ENCODE measurements at regions of chr1 and their contacts with region 1.

Region 1: DNA sequence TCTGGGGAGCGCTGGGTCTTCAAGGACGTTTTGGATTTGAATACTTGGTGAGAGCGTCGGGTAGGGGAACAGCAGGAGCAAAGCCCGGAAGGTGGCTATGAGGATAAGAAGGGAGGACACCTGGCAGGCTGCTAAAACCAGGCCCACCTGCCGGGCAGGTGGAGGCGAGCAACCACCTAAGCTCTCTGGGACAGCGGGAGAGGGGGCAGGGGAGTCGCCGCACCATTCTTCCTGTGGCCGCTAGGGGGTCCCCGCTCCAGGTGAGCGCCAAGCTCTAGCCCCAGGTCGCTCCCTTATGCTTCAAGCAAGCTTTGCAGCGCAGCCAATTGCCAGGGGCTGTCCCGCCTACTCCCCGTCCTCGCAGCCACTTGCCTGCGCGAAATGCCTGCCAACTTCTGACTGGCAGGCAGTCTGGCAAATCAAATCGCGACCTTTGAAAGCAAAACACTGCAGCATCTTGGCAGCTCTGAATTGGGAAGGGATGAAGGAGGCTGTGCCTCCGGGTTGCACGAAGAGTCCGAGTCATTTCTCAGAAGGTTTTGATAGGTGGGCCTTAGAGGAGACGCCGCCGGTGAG is at the start of gene NIPAL3:
- DNase-seq: peak; percentile 99
- ATAC-seq: peak; percentile 96
- H3K4me3 Mint-ChIP-seq: peak within 1 kb of the TSS; percentile 99
- H3K27ac Mint-ChIP-seq: peak within 1 kb of the TSS; percentile 90
- H3K4me1 Mint-ChIP-seq: peaks cover 65% of the 10 kb centered on the region
- H3K27me3 Mint-ChIP-seq: no peaks in the 10 kb centered on the region
- total RNA-seq, gene NIPAL3: 43.4 to 46.9 TPM

Region 2: DNA sequence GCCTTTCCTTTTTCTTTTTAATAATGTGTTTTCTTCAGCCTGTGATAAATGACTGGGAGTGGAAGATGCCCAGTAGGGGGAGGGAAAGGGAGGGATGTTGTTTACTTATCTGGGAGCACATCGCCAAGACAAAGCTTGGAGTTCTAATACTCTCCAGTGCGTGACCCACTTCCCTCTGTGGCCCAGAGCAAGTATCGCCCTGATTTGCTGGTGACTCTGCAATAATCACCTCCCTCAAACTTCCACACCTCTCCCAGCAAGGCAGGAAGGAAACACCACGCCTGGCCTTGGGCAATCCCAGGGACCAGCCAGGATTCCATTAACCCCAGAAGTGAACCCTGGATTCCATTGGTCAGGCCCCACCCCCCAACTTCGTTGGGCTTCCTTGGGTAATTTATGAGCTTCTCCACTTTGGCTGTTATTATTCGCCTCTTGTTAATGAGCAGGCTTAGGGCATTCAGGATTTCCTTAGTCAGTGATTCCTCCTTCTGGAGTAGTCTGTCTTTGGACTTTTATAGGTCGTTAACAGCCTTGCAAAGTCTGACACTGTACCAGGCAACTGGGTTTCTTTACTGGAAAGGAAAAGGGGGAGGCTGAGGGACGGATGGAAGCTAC is 120.6 kb before region 1 on chr1:
- CTCF ChIA-PET with region 1: no interaction called
- POLR2A ChIA-PET with region 1: no interaction called
- DNase-seq: no peak
- ATAC-seq: no peak
- H3K4me3 Mint-ChIP-seq: no peak overlapping the region
- H3K27ac Mint-ChIP-seq: no peak overlapping the region
- H3K4me1 Mint-ChIP-seq: no peaks in the 10 kb centered on the region
- H3K27me3 Mint-ChIP-seq: peaks cover 31% of the 10 kb centered on the region

Region 3: GRCh38 chr1:24321697-24322469 is 93.5 kb before region 1 on chr1:
- CTCF ChIA-PET with region 1: interaction called, 10 read pairs
- POLR2A ChIA-PET with region 1: no interaction called
- DNase-seq: peak; percentile 79
- ATAC-seq: peak; percentile 81
- H3K4me3 Mint-ChIP-seq: peak overlapping the region; percentile 62
- H3K27ac Mint-ChIP-seq: peak overlapping the region; percentile 68
- H3K4me1 Mint-ChIP-seq: peaks cover 42% of the 10 kb centered on the region
- H3K27me3 Mint-ChIP-seq: peaks cover 88% of the 10 kb centered on the region

Region 4: DNA sequence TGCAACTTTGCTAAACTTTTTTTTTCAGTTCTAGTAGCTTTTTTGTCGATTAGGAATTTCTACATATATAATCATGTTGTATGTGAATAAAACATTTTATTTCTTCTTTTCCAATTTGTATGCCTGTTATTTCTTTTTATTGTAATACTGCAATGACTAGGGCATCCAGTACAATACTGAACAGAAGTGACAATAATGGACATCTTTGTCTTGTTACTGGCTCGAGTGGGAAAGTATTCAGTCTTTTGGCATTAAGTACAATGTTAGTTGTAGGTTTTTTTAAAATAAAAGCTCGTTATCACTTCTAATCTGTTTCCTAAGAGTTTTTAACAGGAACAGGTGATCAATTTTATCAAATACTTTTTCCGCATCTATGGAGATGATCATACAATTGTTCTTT is 11.6 kb before region 1 on chr1:
- CTCF ChIA-PET with region 1: interaction called, 50 read pairs
- POLR2A ChIA-PET with region 1: no interaction called
- DNase-seq: no peak
- ATAC-seq: no peak
- H3K4me3 Mint-ChIP-seq: no peak overlapping the region
- H3K27ac Mint-ChIP-seq: no peak overlapping the region
- H3K4me1 Mint-ChIP-seq: no peaks in the 10 kb centered on the region
- H3K27me3 Mint-ChIP-seq: no peaks in the 10 kb centered on the region

Region 5: GRCh38 chr1:24481101-24481500 is 65.7 kb after region 1 on chr1:
- CTCF ChIA-PET with region 1: interaction called, 56 read pairs
- POLR2A ChIA-PET with region 1: interaction called, 11 read pairs
- DNase-seq: peak; percentile 70
- ATAC-seq: peak; percentile 78
- H3K4me3 Mint-ChIP-seq: peak overlapping the region; percentile 54
- H3K27ac Mint-ChIP-seq: peak overlapping the region; percentile 97
- H3K4me1 Mint-ChIP-seq: peaks cover 56% of the 10 kb centered on the region
- H3K27me3 Mint-ChIP-seq: no peaks in the 10 kb centered on the region

Region 6: GRCh38 chr1:24502709-24503058 is 87.3 kb after region 1 on chr1 and contains the start of gene RCAN3:
- CTCF ChIA-PET with region 1: interaction called, 138 read pairs
- POLR2A ChIA-PET with region 1: interaction called, 61 read pairs
- DNase-seq: peak; percentile 93
- ATAC-seq: peak; percentile 81
- H3K4me3 Mint-ChIP-seq: peak within 1 kb of the TSS; percentile 94
- H3K27ac Mint-ChIP-seq: peak within 1 kb of the TSS; percentile 97
- H3K4me1 Mint-ChIP-seq: peaks cover 65% of the 10 kb centered on the region
- H3K27me3 Mint-ChIP-seq: no peaks in the 10 kb centered on the region
- total RNA-seq, gene RCAN3: 63.7 to 65.6 TPM

Region 7: DNA sequence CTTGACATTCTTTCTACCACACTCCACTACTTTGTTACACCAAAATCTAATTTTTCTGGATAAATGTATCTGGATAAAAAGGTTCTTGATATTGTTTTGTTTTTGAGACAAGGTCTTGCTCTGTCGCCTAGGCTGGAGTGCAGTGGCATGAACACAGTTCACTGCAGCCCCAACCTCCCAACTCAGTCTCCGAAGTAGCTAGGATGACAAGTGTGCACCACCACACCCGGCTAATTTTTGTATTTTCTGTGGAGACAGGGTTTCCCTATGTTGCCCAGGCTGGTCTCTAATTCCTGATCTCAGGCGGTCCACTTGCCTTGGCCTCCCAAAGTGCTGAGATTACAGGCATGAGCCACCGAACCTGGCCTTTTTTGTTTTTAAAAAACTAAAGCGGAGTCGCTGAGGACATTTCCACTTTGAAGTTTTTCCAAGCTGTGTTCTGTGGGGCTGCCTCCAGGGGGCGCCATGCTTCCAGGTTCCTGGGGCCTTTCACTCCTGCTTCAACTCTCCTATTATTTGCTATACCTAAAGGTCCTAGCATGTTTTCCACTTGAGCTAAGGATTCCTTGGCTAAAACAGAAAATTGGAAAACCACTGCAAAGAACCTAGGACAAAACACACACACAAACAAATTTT is 126.4 kb after region 1 on chr1:
- CTCF ChIA-PET with region 1: interaction called, 26 read pairs
- POLR2A ChIA-PET with region 1: interaction called, 6 read pairs
- DNase-seq: peak; percentile 50
- ATAC-seq: no peak
- H3K4me3 Mint-ChIP-seq: no peak overlapping the region
- H3K27ac Mint-ChIP-seq: no peak overlapping the region
- H3K4me1 Mint-ChIP-seq: peaks cover 60% of the 10 kb centered on the region
- H3K27me3 Mint-ChIP-seq: no peaks in the 10 kb centered on the region